Activated naive CD4-positive, alpha-beta T cell treated with anti-CD3 and anti-CD28 coated beads for 36 hours (primary cell): ENCODE measurements at regions of chr13 and their contacts with region 1.

Region 1: DNA sequence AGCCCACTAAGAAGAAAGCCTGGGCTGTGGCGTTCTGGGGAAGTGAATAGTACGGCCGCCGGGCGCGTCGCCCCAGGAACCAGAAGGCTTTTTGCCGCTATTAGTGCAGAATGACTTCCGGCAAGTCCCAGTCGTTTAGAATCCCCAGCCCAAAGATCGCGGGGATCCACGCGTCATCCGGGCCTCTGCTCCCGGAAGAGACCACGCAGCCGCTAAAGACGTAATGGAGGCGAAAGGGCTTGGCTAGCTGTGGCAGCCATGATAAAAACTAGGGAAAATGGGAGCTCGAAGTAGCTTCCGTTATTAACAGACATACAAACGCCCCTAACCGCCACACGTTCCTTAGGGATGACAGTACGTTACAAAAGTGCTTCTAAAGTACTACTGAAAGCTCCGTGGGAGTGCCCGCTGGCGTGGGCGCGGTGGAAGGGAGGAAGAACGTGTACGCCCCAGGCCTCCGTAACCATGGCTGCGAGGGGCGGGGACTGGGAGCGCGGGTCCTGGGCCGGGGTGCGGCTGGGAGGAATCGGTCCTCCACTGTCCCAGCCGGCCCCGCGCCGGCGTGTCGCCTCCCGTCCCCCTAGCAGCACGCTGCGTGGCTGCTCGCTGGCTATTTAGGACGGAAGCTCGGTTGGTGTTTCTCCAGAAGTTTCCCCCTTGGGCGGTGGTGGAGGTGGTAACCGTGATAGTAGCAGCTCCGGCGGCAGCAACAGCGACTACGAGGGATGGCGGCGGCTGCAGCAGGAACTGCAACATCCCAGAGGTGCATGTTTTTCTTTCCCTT is at the start of gene SUGT1:
- DNase-seq: peak; percentile 95
- H3K4me3 Mint-ChIP-seq: no peak within 1 kb of the TSS
- H3K27ac Mint-ChIP-seq: no peak within 1 kb of the TSS
- H3K4me1 Mint-ChIP-seq: peaks cover 14% of the 10 kb centered on the region
- H3K27me3 Mint-ChIP-seq: no peaks in the 10 kb centered on the region
- total RNA-seq, gene SUGT1: 42.7 to 44.1 TPM

Region 2: GRCh38 chr13:52011632-52012511 is 640.5 kb before region 1 on chr13 and contains the start of gene ALG11:
- CTCF ChIA-PET with region 1: no interaction called
- intact Hi-C with region 1: loop called (anchors 5 kb)
- DNase-seq: peak; percentile 100
- H3K4me3 Mint-ChIP-seq: peak within 1 kb of the TSS; percentile 98
- H3K27ac Mint-ChIP-seq: peak within 1 kb of the TSS; percentile 85
- H3K4me1 Mint-ChIP-seq: peaks cover 14% of the 10 kb centered on the region
- H3K27me3 Mint-ChIP-seq: peaks cover 10% of the 10 kb centered on the region
- total RNA-seq, gene ALG11: 12.6 to 15.6 TPM

Region 3: GRCh38 chr13:52695856-52696255 is 43.5 kb after region 1 on chr13:
- CTCF ChIA-PET with region 1: interaction called, 3 read pairs
- intact Hi-C with region 1: loop called (anchors 1 kb)
- DNase-seq: peak; percentile 63
- H3K4me3 Mint-ChIP-seq: no peak overlapping the region
- H3K27ac Mint-ChIP-seq: no peak overlapping the region
- H3K4me1 Mint-ChIP-seq: peaks cover 14% of the 10 kb centered on the region
- H3K27me3 Mint-ChIP-seq: no peaks in the 10 kb centered on the region